ENCODE measurements at regions of chr1 and their contacts with region 1.

Region 1: DNA sequence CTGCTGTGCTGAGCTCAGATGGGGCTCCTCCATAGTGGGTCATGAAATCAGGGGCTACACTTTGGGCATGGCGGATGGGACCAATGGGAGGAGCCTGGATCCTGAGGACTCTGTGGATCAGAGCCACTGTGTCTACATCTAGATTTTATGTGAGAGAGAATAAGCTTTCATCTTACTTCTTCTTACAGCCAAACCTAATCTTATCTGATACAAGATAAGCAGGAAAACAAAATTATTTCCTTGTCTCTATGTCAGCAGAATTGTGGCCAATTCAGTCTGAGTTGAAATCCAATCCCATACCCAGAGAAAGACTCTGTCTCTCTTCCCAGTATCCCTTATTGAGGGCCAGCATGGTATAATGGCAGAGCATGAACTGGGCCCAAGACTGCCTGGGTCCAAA is 56.2 kb downstream of the KIF14 start:
- DNase-seq: no peak
- ATAC-seq: no peak
- H3K4me3 ChIP-seq: no peak overlapping the region
- H3K27ac ChIP-seq: no peak overlapping the region
- H3K4me1 ChIP-seq: no peaks in the 10 kb centered on the region
- H3K27me3 ChIP-seq: no peaks in the 10 kb centered on the region
- CTCF ChIP-seq: no peak

Region 2: GRCh38 chr1:200602632-200603031 is 38.3 kb after region 1 on chr1:
- CTCF ChIA-PET with region 1: no interaction called
- POLR2A ChIA-PET with region 1: interaction called, 16 read pairs
- in situ Hi-C with region 1: no loop called
- intact Hi-C with region 1: no loop called
- DNase-seq: no peak
- ATAC-seq: no peak
- H3K4me3 ChIP-seq: no peak overlapping the region
- H3K27ac ChIP-seq: no peak overlapping the region
- H3K4me1 ChIP-seq: no peaks in the 10 kb centered on the region
- H3K27me3 ChIP-seq: no peaks in the 10 kb centered on the region
- CTCF ChIP-seq: no peak

Measured in Panc1 (cell line).